Prostate gland (tissue), 2 donors: ENCODE measurements at regions of chr20 and their contacts with region 1.

Region 1: GRCh38 chr20:57440678-57441520 is 49.7 kb downstream of the RBM38 start:
- DNase-seq: peak; percentile 86
- H3K4me3 ChIP-seq: no peak overlapping the region
- H3K27ac ChIP-seq: peak overlapping the region; percentile 85 to 92
- H3K4me1 ChIP-seq: peaks cover 7% of the 10 kb centered on the region
- H3K27me3 ChIP-seq: no peaks in the 10 kb centered on the region
- CTCF ChIP-seq: no peak
- POLR2A ChIP-seq: no peak

Region 2: DNA sequence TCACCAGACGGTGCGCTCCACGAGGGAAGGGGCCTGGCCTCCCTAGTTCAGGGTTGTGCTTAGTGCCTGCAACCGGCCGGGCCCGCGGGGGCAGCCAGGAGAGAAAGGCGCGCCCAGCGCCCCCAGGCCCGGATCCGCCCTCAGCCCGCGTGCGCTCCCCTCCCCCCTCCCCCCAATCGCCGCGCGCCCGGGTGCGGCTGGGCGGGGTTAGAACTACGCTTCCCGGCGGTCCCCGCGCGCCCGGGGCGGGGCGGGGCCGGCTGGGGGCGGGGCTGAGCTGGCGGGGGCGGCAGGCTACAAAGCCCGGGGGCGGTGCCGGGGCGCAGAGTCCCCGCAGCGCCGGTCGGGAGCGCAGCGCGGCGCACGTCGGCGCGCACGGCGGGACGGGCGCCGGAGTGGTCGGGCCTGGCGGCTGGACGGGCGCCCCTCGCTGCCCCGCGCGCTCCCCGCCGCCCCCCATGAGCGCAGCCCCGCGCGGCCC is 49.8 kb before region 1 on chr20 and contains the start of gene RBM38:
- intact Hi-C with region 1: loop called (anchors 2 kb)
- DNase-seq: no peak
- H3K4me3 ChIP-seq: peak within 1 kb of the TSS; percentile 61 to 62
- H3K27ac ChIP-seq: peak within 1 kb of the TSS; percentile 78 to 81
- H3K4me1 ChIP-seq: peaks cover 5% of the 10 kb centered on the region
- H3K27me3 ChIP-seq: no peaks in the 10 kb centered on the region
- CTCF ChIP-seq: no peak
- POLR2A ChIP-seq: no peak
- total RNA-seq, gene RBM38: 29.9 to 104 TPM

Region 3: GRCh38 chr20:57476084-57476526 is 35.2 kb after region 1 on chr20:
- intact Hi-C with region 1: loop called (anchors 5 kb)
- DNase-seq: no peak
- H3K4me3 ChIP-seq: no peak overlapping the region
- H3K27ac ChIP-seq: no peak overlapping the region
- H3K4me1 ChIP-seq: no peaks in the 10 kb centered on the region
- H3K27me3 ChIP-seq: no peaks in the 10 kb centered on the region
- CTCF ChIP-seq: no peak
- POLR2A ChIP-seq: no peak